CD4-positive, alpha-beta T cell (primary cell): ENCODE measurements at regions of chr7 and their contacts with region 1.

Region 1: GRCh38 chr7:3117488-3118231 is 74.0 kb upstream of the CARD11 start:
- DNase-seq: peak in 5 of 14 experiments; percentile 14 to 60 (median 37)
- ATAC-seq: peak; percentile 50
- H3K4me3 ChIP-seq: no peak overlapping the region
- H3K4me3 Mint-ChIP-seq: peak overlapping the region; percentile 91
- H3K27ac ChIP-seq: no peak overlapping the region
- H3K27ac Mint-ChIP-seq: peak overlapping the region; percentile 76
- H3K4me1 ChIP-seq: peaks cover 52% of the 10 kb centered on the region
- H3K4me1 Mint-ChIP-seq: peaks cover 71% of the 10 kb centered on the region
- H3K27me3 ChIP-seq: no peaks in the 10 kb centered on the region
- H3K27me3 Mint-ChIP-seq: no peaks in the 10 kb centered on the region
- CTCF ChIP-seq: no peak

Region 2: GRCh38 chr7:2660585-2661408 is 456.9 kb before region 1 on chr7:
- CTCF ChIA-PET with region 1: no interaction called
- POLR2A ChIA-PET with region 1: no interaction called
- intact Hi-C with region 1: no loop called
- DNase-seq: no peak
- ATAC-seq: no peak
- H3K4me3 ChIP-seq: no peak overlapping the region
- H3K4me3 Mint-ChIP-seq: no peak overlapping the region
- H3K27ac ChIP-seq: no peak overlapping the region
- H3K27ac Mint-ChIP-seq: no peak overlapping the region
- H3K4me1 ChIP-seq: no peaks in the 10 kb centered on the region
- H3K4me1 Mint-ChIP-seq: no peaks in the 10 kb centered on the region
- H3K27me3 ChIP-seq: no peaks in the 10 kb centered on the region
- H3K27me3 Mint-ChIP-seq: no peaks in the 10 kb centered on the region
- CTCF ChIP-seq: no peak

Region 3: DNA sequence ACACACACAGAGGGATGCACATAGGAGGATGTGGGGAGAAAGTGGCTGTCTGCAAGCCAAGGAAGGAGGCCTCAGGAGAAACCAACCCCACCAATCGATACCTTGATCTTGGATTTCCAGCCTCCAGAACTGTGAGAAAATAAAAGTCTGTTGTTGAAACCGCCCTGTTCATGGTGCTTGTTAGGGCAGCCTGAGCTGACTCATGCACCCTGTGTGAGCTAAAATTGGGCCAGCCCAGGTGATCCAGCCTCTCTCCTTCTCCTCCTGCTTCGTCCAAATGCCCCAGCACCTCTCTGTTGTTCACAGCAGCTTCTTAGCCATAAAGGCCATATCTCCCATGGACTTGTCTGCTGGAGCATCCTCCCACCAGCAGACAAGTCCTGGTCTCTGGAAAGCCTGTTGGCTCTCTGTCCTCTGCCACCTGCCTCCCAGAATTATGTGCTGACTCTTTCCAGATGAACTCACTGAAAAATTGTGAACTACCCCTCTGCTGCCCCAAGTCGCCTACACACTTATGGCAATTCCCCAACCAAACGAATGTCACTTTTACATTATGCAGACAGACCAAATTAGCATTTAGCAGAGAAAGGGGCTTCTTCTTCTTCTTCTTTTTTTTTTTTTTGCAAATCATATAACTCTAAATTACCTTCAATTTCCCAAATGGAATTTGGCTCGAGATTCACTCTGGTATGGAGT is 43.7 kb before region 1 on chr7:
- CTCF ChIA-PET with region 1: no interaction called
- POLR2A ChIA-PET with region 1: no interaction called
- intact Hi-C with region 1: loop called in 1 of 2 experiments (anchors 5 kb)
- DNase-seq: no peak
- ATAC-seq: no peak
- H3K4me3 ChIP-seq: no peak overlapping the region
- H3K4me3 Mint-ChIP-seq: no peak overlapping the region
- H3K27ac ChIP-seq: no peak overlapping the region
- H3K27ac Mint-ChIP-seq: no peak overlapping the region
- H3K4me1 ChIP-seq: peaks cover 16% of the 10 kb centered on the region
- H3K4me1 Mint-ChIP-seq: peaks cover 31% of the 10 kb centered on the region
- H3K27me3 ChIP-seq: no peaks in the 10 kb centered on the region
- H3K27me3 Mint-ChIP-seq: no peaks in the 10 kb centered on the region
- CTCF ChIP-seq: no peak

Region 4: DNA sequence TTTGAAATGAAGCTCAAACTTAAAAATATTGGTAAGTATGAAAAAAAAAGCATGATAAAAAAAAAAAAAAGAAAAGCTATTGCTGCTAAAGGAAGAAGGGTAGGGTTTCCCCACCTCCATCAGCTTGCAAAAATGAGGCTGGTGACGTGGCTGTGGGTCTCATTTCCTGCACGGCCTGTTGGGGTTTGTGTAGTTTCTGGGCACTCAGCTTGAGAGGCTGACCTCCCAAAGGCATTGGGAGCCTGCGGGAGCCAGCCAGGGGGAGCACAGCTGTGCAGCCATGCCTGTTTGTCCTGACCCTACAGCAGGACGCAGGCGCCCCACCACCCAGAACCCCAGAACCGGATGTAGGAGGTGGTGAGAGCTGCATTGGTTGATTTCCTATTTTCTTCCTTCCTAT is 25.2 kb before region 1 on chr7:
- CTCF ChIA-PET with region 1: no interaction called
- POLR2A ChIA-PET with region 1: interaction called, 33 read pairs
- intact Hi-C with region 1: no loop called
- DNase-seq: peak; percentile 45 to 92 (median 65)
- ATAC-seq: peak; percentile 78
- H3K4me3 ChIP-seq: peak overlapping the region; percentile 8
- H3K4me3 Mint-ChIP-seq: peak overlapping the region; percentile 75
- H3K27ac ChIP-seq: peak overlapping the region; percentile 78 to 83
- H3K27ac Mint-ChIP-seq: peak overlapping the region; percentile 97
- H3K4me1 ChIP-seq: peaks cover 72% of the 10 kb centered on the region
- H3K4me1 Mint-ChIP-seq: peaks cover 67% of the 10 kb centered on the region
- H3K27me3 ChIP-seq: no peaks in the 10 kb centered on the region
- H3K27me3 Mint-ChIP-seq: no peaks in the 10 kb centered on the region
- CTCF ChIP-seq: no peak